ENCODE measurements at regions of chr14 and their contacts with region 1.

Region 1: GRCh38 chr14:83071888-83072501 is 1538.3 kb upstream of the SEL1L start:
- DNase-seq: peak; percentile 39
- H3K4me3 ChIP-seq: no peak overlapping the region
- H3K27ac ChIP-seq: no peak overlapping the region
- H3K4me1 ChIP-seq: no peaks in the 10 kb centered on the region
- CTCF ChIP-seq: peak; percentile 71

Region 2: GRCh38 chr14:83058068-83058467 is 13.9 kb before region 1 on chr14:
- CTCF ChIA-PET with region 1: no interaction called
- POLR2A ChIA-PET with region 1: interaction called, 10 read pairs
- intact Hi-C with region 1: no loop called
- DNase-seq: no peak
- H3K4me3 ChIP-seq: no peak overlapping the region
- H3K27ac ChIP-seq: no peak overlapping the region
- H3K4me1 ChIP-seq: no peaks in the 10 kb centered on the region
- CTCF ChIP-seq: no peak

Region 3: DNA sequence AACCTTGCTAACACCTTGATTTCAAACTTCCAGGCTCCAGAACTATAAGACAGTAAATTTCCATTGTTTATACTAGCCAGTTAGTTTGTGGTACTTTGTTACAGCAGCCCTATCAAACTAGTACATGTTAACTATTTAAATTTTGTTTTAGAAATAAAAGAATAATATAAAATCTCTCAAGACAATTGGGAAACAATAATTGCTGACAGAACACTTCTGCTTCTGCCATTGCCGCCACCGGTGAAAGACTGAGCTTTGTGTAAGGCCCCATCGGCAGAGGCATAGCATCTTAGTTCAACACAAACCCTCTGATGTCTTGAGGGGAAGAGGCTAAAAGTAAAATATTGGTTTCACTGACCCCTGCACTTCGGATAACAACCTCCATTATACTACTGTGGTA is 68.8 kb after region 1 on chr14:
- CTCF ChIA-PET with region 1: no interaction called
- POLR2A ChIA-PET with region 1: no interaction called
- intact Hi-C with region 1: no loop called
- DNase-seq: no peak
- H3K4me3 ChIP-seq: no peak overlapping the region
- H3K27ac ChIP-seq: no peak overlapping the region
- H3K4me1 ChIP-seq: no peaks in the 10 kb centered on the region
- CTCF ChIP-seq: no peak